Adrenal gland (tissue), 19 donors: ENCODE measurements at regions of chr17 and their contacts with region 1.

Region 1: DNA sequence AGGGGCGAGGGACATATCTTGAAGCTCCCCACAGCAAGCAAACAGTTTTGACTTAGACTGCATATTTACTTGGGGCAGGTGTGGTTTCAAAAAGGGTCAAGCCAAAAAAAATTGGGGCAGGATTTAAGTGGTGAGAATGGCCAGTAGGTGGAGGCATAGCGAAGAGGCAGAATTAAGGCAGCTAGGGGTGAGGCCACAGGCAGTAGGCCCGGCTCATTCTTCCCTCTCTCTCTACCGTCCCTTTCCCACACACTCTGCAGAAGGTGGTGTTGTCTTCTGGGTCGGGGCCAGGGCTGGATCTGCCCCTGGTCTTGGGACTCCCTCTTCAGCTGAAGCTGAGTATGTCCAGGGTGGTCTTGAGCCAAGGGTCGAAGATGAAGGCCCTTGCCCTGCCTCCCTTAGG is 2.6 kb downstream of the SHBG start:
- DNase-seq: peak; percentile 43 to 69 (median 63)
- H3K4me3 ChIP-seq: no peak overlapping the region
- H3K27ac ChIP-seq: peak overlapping the region in 1 of 5 donors; percentile 32
- H3K4me1 ChIP-seq: peaks cover 6% of the 10 kb centered on the region in 2 donors
- H3K27me3 ChIP-seq: no peaks in the 10 kb centered on the region
- CTCF ChIP-seq: peak; percentile 34 to 68 (median 61)
- POLR2A ChIP-seq: no peak

Region 2: GRCh38 chr17:7687908-7688807 is 55.7 kb after region 1 on chr17 and contains the start of gene WRAP53:
- intact Hi-C with region 1: loop called (anchors 5 to 10 kb)
- DNase-seq: peak; percentile 97 to 100 (median 99)
- H3K4me3 ChIP-seq: peak within 1 kb of the TSS; percentile 6 to 99 (median 88)
- H3K27ac ChIP-seq: peak within 1 kb of the TSS; percentile 86 to 98 (median 97)
- H3K4me1 ChIP-seq: peaks cover 5 to 26% of the 10 kb centered on the region in 2 donors
- H3K27me3 ChIP-seq: no peaks in the 10 kb centered on the region
- CTCF ChIP-seq: peak; percentile 98 to 100 (median 99)
- POLR2A ChIP-seq: peak in 1 of 2 donors; percentile 58
- total RNA-seq, gene WRAP53: 3.4 to 15.3 (median 6.7) TPM

Region 3: GRCh38 chr17:7782237-7782636 is 149.7 kb after region 1 on chr17:
- intact Hi-C with region 1: loop called in 1 of 2 experiments (anchors 10 kb)
- DNase-seq: no peak
- H3K4me3 ChIP-seq: no peak overlapping the region
- H3K27ac ChIP-seq: no peak overlapping the region
- H3K4me1 ChIP-seq: no peaks in the 10 kb centered on the region
- H3K27me3 ChIP-seq: peaks cover 5% of the 10 kb centered on the region
- CTCF ChIP-seq: peak in 4 of 6 experiments; percentile 8 to 40 (median 22)
- POLR2A ChIP-seq: no peak